ENCODE measurements at regions of chr19 and their contacts with region 1.

Region 1: GRCh38 chr19:41597600-41598041 is 21.7 kb downstream of the CEACAM21 start:
- DNase-seq: peak; percentile 91
- ATAC-seq: peak; percentile 95
- H3K4me3 ChIP-seq: no peak overlapping the region
- H3K4me3 Mint-ChIP-seq: no peak overlapping the region
- H3K27ac ChIP-seq: no peak overlapping the region
- H3K27ac Mint-ChIP-seq: peak overlapping the region; percentile 42
- H3K4me1 ChIP-seq: peaks cover 0 to 19% of the 10 kb centered on the region in 2 donors
- H3K4me1 Mint-ChIP-seq: peaks cover 14% of the 10 kb centered on the region
- H3K27me3 ChIP-seq: peaks cover 0 to 3% (median 0%) of the 10 kb centered on the region in 4 experiments
- H3K27me3 Mint-ChIP-seq: peaks cover 12% of the 10 kb centered on the region
- CTCF ChIP-seq: peak; percentile 93

Region 2: DNA sequence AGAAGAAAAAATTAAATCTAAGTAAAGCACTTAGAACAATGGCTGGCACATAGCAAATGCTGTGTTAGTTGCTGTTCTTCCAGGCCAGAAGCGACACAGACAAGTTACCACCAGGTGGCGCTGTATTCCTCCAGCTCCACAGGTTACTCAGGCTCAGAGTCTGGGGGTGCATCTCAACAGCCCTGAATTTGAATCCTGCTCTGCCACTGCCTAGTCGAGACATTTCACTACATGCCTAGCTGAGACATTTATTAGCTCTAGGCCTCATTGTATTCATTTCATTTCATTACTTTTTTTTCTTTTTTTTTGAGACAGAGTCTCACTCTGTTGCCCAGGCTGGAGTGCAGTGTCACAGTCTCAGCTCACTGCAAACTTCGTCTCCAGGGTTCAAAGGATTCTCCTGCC is 623.0 kb before region 1 on chr19:
- CTCF ChIA-PET with region 1: interaction called, 3 read pairs
- POLR2A ChIA-PET with region 1: no interaction called
- intact Hi-C with region 1: loop called (anchors 5 kb)
- DNase-seq: peak; percentile 81
- ATAC-seq: peak; percentile 64
- H3K4me3 ChIP-seq: no peak overlapping the region
- H3K4me3 Mint-ChIP-seq: no peak overlapping the region
- H3K27ac ChIP-seq: no peak overlapping the region
- H3K27ac Mint-ChIP-seq: no peak overlapping the region
- H3K4me1 ChIP-seq: no peaks in the 10 kb centered on the region
- H3K4me1 Mint-ChIP-seq: peaks cover 1% of the 10 kb centered on the region
- H3K27me3 ChIP-seq: peaks cover 0 to 13% (median 6%) of the 10 kb centered on the region in 4 experiments
- H3K27me3 Mint-ChIP-seq: peaks cover 40% of the 10 kb centered on the region
- CTCF ChIP-seq: peak; percentile 93

Region 3: DNA sequence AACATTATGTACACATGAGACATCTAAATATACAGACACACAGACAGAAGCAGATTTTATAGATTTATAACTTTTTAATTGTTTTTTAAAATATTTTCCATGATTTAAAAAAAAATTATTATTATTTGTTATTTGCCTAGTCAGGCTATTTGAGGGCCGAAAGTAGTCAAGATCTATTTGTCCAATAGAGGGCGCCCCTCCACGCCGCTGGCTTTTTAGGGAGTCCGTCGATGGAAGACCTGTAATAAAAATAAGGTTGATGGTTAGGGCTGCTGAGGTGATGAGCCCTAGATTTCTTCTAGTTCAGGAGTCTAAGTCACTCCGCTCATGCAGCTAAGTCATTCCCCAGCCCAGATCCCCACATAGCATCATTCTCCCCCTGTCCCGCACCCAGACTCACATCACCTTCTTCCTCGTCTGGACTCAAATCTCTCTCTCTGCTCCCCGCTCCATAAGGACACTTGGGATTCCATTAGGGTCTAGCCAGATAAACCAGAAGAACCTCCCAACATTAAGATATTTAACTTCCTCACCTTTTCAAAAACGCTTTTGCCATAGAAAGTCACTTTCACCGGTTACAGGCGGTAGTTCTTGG is 55.5 kb before region 1 on chr19:
- CTCF ChIA-PET with region 1: interaction called, 6 read pairs
- POLR2A ChIA-PET with region 1: no interaction called
- intact Hi-C with region 1: loop called (anchors 1 kb)
- DNase-seq: peak; percentile 84
- ATAC-seq: peak; percentile 28
- H3K4me3 ChIP-seq: peak overlapping the region in 1 of 5 experiments; percentile 11
- H3K4me3 Mint-ChIP-seq: peak overlapping the region; percentile 66
- H3K27ac ChIP-seq: no peak overlapping the region
- H3K27ac Mint-ChIP-seq: peak overlapping the region; percentile 54
- H3K4me1 ChIP-seq: peaks cover 43 to 45% of the 10 kb centered on the region in 2 donors
- H3K4me1 Mint-ChIP-seq: peaks cover 55% of the 10 kb centered on the region
- H3K27me3 ChIP-seq: no peaks in the 10 kb centered on the region
- H3K27me3 Mint-ChIP-seq: no peaks in the 10 kb centered on the region
- CTCF ChIP-seq: peak; percentile 88

Region 4: GRCh38 chr19:41570639-41571112 is 26.9 kb before region 1 on chr19:
- CTCF ChIA-PET with region 1: interaction called, 19 read pairs
- POLR2A ChIA-PET with region 1: no interaction called
- intact Hi-C with region 1: no loop called
- DNase-seq: peak; percentile 88
- ATAC-seq: peak; percentile 98
- H3K4me3 ChIP-seq: no peak overlapping the region
- H3K4me3 Mint-ChIP-seq: no peak overlapping the region
- H3K27ac ChIP-seq: no peak overlapping the region
- H3K27ac Mint-ChIP-seq: no peak overlapping the region
- H3K4me1 ChIP-seq: peaks cover 9 to 12% of the 10 kb centered on the region in 2 donors
- H3K4me1 Mint-ChIP-seq: peaks cover 11% of the 10 kb centered on the region
- H3K27me3 ChIP-seq: no peaks in the 10 kb centered on the region
- H3K27me3 Mint-ChIP-seq: peaks cover under 1% of the 10 kb centered on the region
- CTCF ChIP-seq: peak; percentile 91

Region 5: DNA sequence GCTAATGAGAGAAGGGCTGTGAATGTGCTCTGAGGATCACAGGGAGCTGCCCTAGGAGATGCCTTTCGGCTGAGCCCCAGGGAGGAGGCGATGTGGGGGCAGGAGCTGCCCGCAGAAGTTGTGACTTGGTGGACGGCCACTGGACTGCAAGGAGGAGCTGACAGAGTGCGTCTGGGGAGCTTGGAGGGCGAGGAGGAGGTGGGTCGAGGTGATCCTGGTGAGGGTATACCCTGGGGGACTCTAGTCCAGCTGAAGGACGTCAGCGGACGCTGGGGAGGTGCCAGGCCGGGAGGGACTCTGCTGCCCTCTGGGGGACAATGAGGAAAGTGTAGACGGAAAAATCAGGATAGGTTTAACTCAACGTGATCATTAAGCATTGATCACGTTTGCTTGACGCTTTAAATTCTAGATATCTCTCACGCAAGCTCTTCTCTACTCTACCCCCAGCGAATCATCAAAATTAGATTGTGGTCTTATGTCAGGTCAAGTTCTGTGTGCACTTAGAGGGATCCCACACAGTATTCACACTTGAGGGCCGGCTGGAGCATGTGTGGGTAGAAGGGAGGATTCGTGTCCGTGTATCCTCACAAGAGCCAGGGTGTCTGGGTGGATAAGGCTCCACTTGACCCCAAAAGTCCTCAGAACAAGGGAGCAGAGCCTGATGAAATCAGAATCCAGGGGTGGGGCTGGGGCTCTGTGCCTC is 93.8 kb after region 1 on chr19:
- CTCF ChIA-PET with region 1: no interaction called
- POLR2A ChIA-PET with region 1: no interaction called
- intact Hi-C with region 1: no loop called
- DNase-seq: no peak
- ATAC-seq: no peak
- H3K4me3 ChIP-seq: no peak overlapping the region
- H3K4me3 Mint-ChIP-seq: no peak overlapping the region
- H3K27ac ChIP-seq: no peak overlapping the region
- H3K27ac Mint-ChIP-seq: no peak overlapping the region
- H3K4me1 ChIP-seq: no peaks in the 10 kb centered on the region
- H3K4me1 Mint-ChIP-seq: no peaks in the 10 kb centered on the region
- H3K27me3 ChIP-seq: peaks cover 0 to 37% (median 9%) of the 10 kb centered on the region in 4 experiments
- H3K27me3 Mint-ChIP-seq: peaks cover 48% of the 10 kb centered on the region
- CTCF ChIP-seq: peak; percentile 51

Measured in B cell (primary cell).